GM12878 (cell line): ENCODE measurements at regions of chr14 and their contacts with region 1.

Region 1: DNA sequence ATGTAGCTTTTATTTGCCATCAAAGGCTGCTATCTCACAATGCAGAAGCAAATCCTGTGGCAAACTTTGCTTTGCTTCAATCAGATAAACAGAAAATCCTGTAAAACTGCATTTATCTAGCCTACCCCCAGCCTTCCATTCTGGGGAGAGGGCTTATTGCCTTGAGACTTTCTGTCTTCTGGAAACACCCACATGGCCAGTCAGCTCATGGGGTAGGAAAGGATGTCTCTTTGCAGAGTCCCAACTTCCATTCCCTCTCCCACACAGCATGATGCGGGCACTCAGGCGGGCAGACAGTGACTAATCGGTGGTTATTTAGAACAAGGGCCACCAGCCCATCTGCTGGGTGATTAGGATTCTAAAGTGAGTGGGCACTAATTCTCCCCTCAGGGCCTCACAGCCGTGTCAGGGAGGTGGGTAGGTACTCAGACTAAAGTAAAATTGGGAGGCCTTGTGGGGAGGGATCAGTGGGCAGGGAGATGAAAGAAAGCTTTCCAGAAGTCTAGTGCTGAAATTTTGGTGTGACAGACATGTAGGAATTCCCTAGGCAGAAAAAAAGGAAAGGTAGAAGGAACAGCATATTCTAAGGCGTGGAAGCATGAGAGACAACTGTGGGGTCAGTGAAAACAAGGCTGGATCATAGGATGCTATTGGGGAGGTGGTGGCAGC is 720.5 kb downstream of the VRK1 start:
- DNase-seq: no peak
- ATAC-seq: no peak
- H3K4me3 ChIP-seq: no peak overlapping the region
- H3K27ac ChIP-seq: no peak overlapping the region
- H3K4me1 ChIP-seq: no peaks in the 10 kb centered on the region
- H3K27me3 ChIP-seq: no peaks in the 10 kb centered on the region
- CTCF ChIP-seq: no peak
- EP300 ChIP-seq: no peak
- POLR2A ChIP-seq: no peak
- RAD21 ChIP-seq: no peak

Region 2: DNA sequence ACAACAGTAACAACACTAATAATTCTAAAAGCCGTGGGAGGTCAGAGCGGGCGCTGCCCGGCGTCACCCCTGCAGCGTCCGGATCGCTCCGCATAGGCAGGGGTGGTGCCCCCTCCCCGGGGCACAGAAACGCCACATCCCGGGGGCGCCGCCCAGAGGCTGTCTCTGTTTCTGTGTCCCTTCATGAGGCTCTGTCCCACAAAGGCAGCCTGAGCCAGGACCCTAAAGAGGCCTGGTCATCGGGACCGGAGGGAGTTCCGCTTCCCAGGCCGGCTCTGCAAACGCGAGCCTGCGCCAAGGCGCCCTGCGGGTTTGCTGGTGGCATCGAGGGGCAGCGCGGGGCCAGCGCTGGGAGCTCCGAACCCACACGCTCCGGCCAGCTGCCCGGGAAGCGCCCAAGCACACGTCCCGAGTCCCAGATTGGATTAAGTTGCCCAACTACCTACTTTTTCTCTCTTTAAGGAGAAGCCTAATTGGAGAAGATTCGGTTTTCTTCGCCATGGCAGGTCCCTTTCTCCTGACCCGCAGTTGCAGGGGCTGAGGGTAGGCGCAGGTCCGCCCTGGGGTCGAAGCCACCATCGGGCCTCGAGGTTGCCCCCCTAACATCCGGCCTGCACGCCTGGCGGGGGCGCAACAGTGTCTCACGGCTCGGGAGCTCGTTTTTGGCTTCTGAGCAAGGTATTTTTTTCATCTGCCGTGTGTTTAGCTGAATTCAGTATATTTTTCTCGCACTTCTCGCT is 298.8 kb before region 1 on chr14:
- CTCF ChIA-PET with region 1: no interaction called
- POLR2A ChIA-PET with region 1: no interaction called
- RAD21 ChIA-PET with region 1: no interaction called
- SMC1A ChIA-PET with region 1: no interaction called
- in situ Hi-C with region 1: no loop called
- intact Hi-C with region 1: no loop called
- DNase-seq: no peak
- ATAC-seq: no peak
- H3K4me3 ChIP-seq: no peak overlapping the region
- H3K27ac ChIP-seq: no peak overlapping the region
- H3K4me1 ChIP-seq: no peaks in the 10 kb centered on the region
- H3K27me3 ChIP-seq: peaks cover 0 to 4% of the 10 kb centered on the region in 2 experiments; a peak in 1 of 4 replicates
- CTCF ChIP-seq: no peak
- EP300 ChIP-seq: no peak
- POLR2A ChIP-seq: no peak
- RAD21 ChIP-seq: no peak

Region 3: GRCh38 chr14:97417331-97417730 is 100.4 kb before region 1 on chr14:
- CTCF ChIA-PET with region 1: no interaction called
- POLR2A ChIA-PET with region 1: no interaction called
- RAD21 ChIA-PET with region 1: no interaction called
- SMC1A ChIA-PET with region 1: no interaction called
- in situ Hi-C with region 1: no loop called
- intact Hi-C with region 1: no loop called
- DNase-seq: no peak
- ATAC-seq: peak; percentile 38
- H3K4me3 ChIP-seq: no peak overlapping the region
- H3K27ac ChIP-seq: no peak overlapping the region
- H3K4me1 ChIP-seq: peaks cover 3% of the 10 kb centered on the region; the same call in 1 of the 2 replicates
- H3K27me3 ChIP-seq: no peaks in the 10 kb centered on the region
- CTCF ChIP-seq: no peak
- EP300 ChIP-seq: no peak
- POLR2A ChIP-seq: no peak
- RAD21 ChIP-seq: no peak

Region 4: GRCh38 chr14:97499792-97500495 is 17.8 kb before region 1 on chr14:
- CTCF ChIA-PET with region 1: interaction called, 3 read pairs
- POLR2A ChIA-PET with region 1: interaction called, 10 read pairs
- RAD21 ChIA-PET with region 1: no interaction called
- SMC1A ChIA-PET with region 1: no interaction called
- in situ Hi-C with region 1: no loop called
- intact Hi-C with region 1: no loop called
- DNase-seq: no peak
- ATAC-seq: no peak
- H3K4me3 ChIP-seq: no peak overlapping the region
- H3K27ac ChIP-seq: no peak overlapping the region
- H3K4me1 ChIP-seq: no peaks in the 10 kb centered on the region
- H3K27me3 ChIP-seq: no peaks in the 10 kb centered on the region
- CTCF ChIP-seq: no peak
- EP300 ChIP-seq: no peak
- POLR2A ChIP-seq: no peak
- RAD21 ChIP-seq: no peak

Region 5: DNA sequence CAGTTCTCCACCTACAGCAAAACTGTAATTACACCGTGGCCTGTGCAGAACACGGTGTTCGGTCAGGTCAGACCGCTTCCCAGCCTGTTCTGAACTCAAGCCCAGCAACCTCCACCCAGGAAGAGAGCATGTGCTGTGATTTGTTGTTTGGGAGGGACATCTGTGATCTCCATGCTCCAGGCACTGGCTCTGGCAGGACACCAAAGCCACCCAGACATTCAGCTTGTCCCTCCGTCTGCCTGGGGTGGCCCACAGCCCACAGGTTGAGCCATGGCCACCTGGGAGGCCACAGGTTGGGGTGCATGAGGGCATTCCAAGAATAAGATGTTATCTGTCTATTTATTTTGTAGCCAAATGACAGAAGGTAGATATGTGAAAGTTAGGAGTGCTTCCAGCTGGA is 370.6 kb after region 1 on chr14:
- CTCF ChIA-PET with region 1: no interaction called
- POLR2A ChIA-PET with region 1: no interaction called
- RAD21 ChIA-PET with region 1: no interaction called
- SMC1A ChIA-PET with region 1: no interaction called
- in situ Hi-C with region 1: no loop called
- intact Hi-C with region 1: no loop called
- DNase-seq: no peak
- ATAC-seq: no peak
- H3K4me3 ChIP-seq: no peak overlapping the region
- H3K27ac ChIP-seq: no peak overlapping the region
- H3K4me1 ChIP-seq: no peaks in the 10 kb centered on the region
- H3K27me3 ChIP-seq: no peaks in the 10 kb centered on the region
- CTCF ChIP-seq: no peak
- EP300 ChIP-seq: no peak
- POLR2A ChIP-seq: no peak
- RAD21 ChIP-seq: no peak